ENCODE measurements at regions of chr7 and their contacts with region 1.

Region 1: GRCh38 chr7:36794689-36795088 is 70.4 kb upstream of the AOAH start:
- DNase-seq: peak in 1 of 2 experiments; percentile 42
- H3K4me3 ChIP-seq: no peak overlapping the region
- H3K4me3 Mint-ChIP-seq: no peak overlapping the region
- H3K27ac Mint-ChIP-seq: peak overlapping the region; percentile 65
- H3K4me1 ChIP-seq: peaks cover 29% of the 10 kb centered on the region
- H3K4me1 Mint-ChIP-seq: peaks cover 19% of the 10 kb centered on the region
- H3K27me3 ChIP-seq: no peaks in the 10 kb centered on the region
- H3K27me3 Mint-ChIP-seq: no peaks in the 10 kb centered on the region
- CTCF ChIP-seq: no peak

Region 2: GRCh38 chr7:36473454-36474282 is 321.0 kb before region 1 on chr7:
- CTCF ChIA-PET with region 1: no interaction called
- POLR2A ChIA-PET with region 1: no interaction called
- intact Hi-C with region 1: loop called (anchors 10 kb)
- DNase-seq: peak in 1 of 2 experiments; percentile 57
- H3K4me3 ChIP-seq: no peak overlapping the region
- H3K4me3 Mint-ChIP-seq: no peak overlapping the region
- H3K27ac Mint-ChIP-seq: no peak overlapping the region
- H3K4me1 ChIP-seq: no peaks in the 10 kb centered on the region
- H3K4me1 Mint-ChIP-seq: no peaks in the 10 kb centered on the region
- H3K27me3 ChIP-seq: no peaks in the 10 kb centered on the region
- H3K27me3 Mint-ChIP-seq: no peaks in the 10 kb centered on the region
- CTCF ChIP-seq: peak; percentile 46 to 52

Region 3: DNA sequence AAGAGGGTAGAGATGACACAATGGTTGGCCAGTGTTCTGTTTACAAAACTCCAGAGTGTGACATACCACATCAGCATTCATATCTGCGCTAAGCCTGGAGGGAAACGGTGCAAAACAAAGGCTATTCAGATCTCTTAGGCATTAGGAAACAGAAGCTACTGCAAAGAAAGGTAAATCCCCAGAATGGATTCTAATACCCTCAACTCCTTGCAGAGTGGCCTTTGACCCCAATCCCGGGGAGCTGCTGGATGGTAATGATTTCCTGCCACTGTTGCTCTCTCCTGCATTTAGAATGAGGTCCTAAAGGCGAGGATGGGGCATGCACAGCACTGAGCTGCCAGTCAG is 135.5 kb before region 1 on chr7:
- CTCF ChIA-PET with region 1: no interaction called
- POLR2A ChIA-PET with region 1: no interaction called
- intact Hi-C with region 1: no loop called
- DNase-seq: peak in 1 of 2 experiments; percentile 7
- H3K4me3 ChIP-seq: no peak overlapping the region
- H3K4me3 Mint-ChIP-seq: no peak overlapping the region
- H3K27ac Mint-ChIP-seq: no peak overlapping the region
- H3K4me1 ChIP-seq: no peaks in the 10 kb centered on the region
- H3K4me1 Mint-ChIP-seq: peaks cover 13% of the 10 kb centered on the region
- H3K27me3 ChIP-seq: no peaks in the 10 kb centered on the region
- H3K27me3 Mint-ChIP-seq: no peaks in the 10 kb centered on the region
- CTCF ChIP-seq: no peak

Region 4: GRCh38 chr7:36814311-36814710 is 19.6 kb after region 1 on chr7:
- CTCF ChIA-PET with region 1: no interaction called
- POLR2A ChIA-PET with region 1: no interaction called
- intact Hi-C with region 1: loop called (anchors 2 kb)
- DNase-seq: peak; percentile 22 to 46
- H3K4me3 ChIP-seq: no peak overlapping the region
- H3K4me3 Mint-ChIP-seq: no peak overlapping the region
- H3K27ac Mint-ChIP-seq: no peak overlapping the region
- H3K4me1 ChIP-seq: peaks cover 9% of the 10 kb centered on the region
- H3K4me1 Mint-ChIP-seq: no peaks in the 10 kb centered on the region
- H3K27me3 ChIP-seq: no peaks in the 10 kb centered on the region
- H3K27me3 Mint-ChIP-seq: no peaks in the 10 kb centered on the region
- CTCF ChIP-seq: no peak

Region 5: DNA sequence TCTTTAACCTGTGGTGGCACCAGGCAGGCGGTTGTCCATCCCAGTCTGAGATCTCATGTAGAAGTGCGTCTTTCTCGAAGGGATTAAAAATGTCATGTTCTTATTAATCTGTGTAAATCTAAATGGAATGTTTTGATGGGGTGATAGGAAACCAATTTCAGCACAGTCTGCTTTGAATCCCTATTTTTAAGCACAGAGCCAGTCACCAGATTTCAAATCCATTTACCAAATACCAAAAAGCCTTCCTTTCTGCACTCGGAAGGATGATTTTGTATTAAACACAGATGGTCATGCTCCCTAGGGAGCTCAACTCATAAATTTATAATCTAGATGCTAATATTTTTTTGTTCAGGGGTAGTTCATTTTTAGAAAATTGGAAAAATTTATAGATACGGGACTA is 90.2 kb after region 1 on chr7:
- CTCF ChIA-PET with region 1: no interaction called
- POLR2A ChIA-PET with region 1: no interaction called
- intact Hi-C with region 1: no loop called
- DNase-seq: no peak
- H3K4me3 ChIP-seq: no peak overlapping the region
- H3K4me3 Mint-ChIP-seq: no peak overlapping the region
- H3K27ac Mint-ChIP-seq: no peak overlapping the region
- H3K4me1 ChIP-seq: no peaks in the 10 kb centered on the region
- H3K4me1 Mint-ChIP-seq: no peaks in the 10 kb centered on the region
- H3K27me3 ChIP-seq: no peaks in the 10 kb centered on the region
- H3K27me3 Mint-ChIP-seq: no peaks in the 10 kb centered on the region
- CTCF ChIP-seq: no peak

Region 6: GRCh38 chr7:36979810-36980248 is 185.1 kb after region 1 on chr7:
- CTCF ChIA-PET with region 1: no interaction called
- POLR2A ChIA-PET with region 1: no interaction called
- intact Hi-C with region 1: loop called (anchors 10 kb)
- DNase-seq: no peak
- H3K4me3 ChIP-seq: no peak overlapping the region
- H3K4me3 Mint-ChIP-seq: no peak overlapping the region
- H3K27ac Mint-ChIP-seq: no peak overlapping the region
- H3K4me1 ChIP-seq: peaks cover 6% of the 10 kb centered on the region; the same call in 1 of the 2 replicates
- H3K4me1 Mint-ChIP-seq: no peaks in the 10 kb centered on the region
- H3K27me3 ChIP-seq: no peaks in the 10 kb centered on the region
- H3K27me3 Mint-ChIP-seq: no peaks in the 10 kb centered on the region
- CTCF ChIP-seq: no peak